AG04450 (cell line): ENCODE measurements at regions of chr16 and their contacts with region 1.

Region 1: GRCh38 chr16:24499193-24499814 is 40.1 kb upstream of the RBBP6 start:
- DNase-seq: no peak
- H3K4me3 ChIP-seq: no peak overlapping the region
- H3K27ac ChIP-seq: no peak overlapping the region
- H3K27me3 ChIP-seq: peaks cover 4% of the 10 kb centered on the region
- CTCF ChIP-seq: peak; percentile 32

Region 2: DNA sequence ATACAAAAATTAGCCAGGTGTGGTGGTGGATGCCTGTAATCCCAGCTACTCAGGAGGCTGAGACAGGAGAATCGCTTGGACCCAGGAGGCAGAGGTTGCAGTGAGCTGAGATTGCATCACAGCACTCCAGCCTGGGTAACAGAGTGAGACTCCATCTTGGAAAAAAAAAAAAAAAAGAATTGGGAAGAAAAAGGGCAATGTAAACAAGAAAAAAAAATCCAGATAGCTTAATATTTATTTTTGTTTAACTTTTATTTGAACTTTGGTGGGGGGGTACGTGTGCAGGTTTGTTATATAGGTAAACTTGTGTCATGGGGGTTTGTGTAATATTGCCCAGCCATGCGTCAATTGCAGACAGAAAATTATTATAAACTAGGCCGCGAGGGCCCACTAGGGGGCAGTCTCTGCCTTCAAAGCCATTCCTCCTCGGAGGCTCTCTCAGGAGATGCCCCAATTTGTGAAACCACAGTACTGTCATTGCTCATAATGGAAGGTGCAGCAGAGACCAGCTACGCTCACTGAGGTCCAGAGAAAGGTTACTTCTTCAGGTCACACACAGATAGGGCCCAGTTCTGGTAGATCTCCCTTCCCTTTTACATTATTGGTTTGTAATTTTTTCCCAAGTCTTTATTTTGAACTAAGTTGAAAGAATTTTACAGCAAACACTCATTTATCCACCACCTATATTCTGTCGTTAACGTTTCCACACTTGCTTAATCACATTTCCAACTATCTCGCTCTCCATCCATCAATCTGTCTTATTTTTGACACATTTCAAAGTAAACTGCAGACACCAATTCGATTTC is 457.3 kb before region 1 on chr16:
- CTCF ChIA-PET with region 1: interaction called, 133 read pairs
- POLR2A ChIA-PET with region 1: no interaction called
- DNase-seq: peak; percentile 11
- H3K4me3 ChIP-seq: no peak overlapping the region
- H3K27ac ChIP-seq: no peak overlapping the region
- H3K27me3 ChIP-seq: no peaks in the 10 kb centered on the region
- CTCF ChIP-seq: peak; percentile 78

Region 3: DNA sequence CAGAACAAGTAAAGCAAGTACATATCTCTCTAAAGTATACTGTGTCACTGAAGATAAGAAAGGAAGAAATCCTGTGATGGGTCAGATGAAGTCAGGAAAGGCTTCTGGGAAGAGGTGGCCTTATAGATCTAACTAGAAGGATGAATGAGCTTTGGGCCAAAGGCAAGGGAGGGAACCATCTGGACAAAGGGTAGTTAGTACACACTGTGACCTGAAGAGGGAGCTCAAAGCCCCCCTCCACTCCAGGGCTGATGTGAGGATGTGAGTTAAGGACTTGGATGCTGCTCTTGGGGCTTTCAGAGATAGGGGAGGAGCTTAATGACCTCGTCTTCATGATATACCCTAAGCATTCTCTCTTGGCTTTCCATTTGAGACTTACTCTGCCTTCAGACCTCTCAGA is 428.5 kb before region 1 on chr16:
- CTCF ChIA-PET with region 1: interaction called, 20 read pairs
- POLR2A ChIA-PET with region 1: no interaction called
- DNase-seq: no peak
- H3K4me3 ChIP-seq: no peak overlapping the region
- H3K27ac ChIP-seq: no peak overlapping the region
- H3K27me3 ChIP-seq: no peaks in the 10 kb centered on the region
- CTCF ChIP-seq: peak; percentile 45